Endothelial cell of umbilical vein (primary cell): ENCODE measurements at regions of chr9 and their contacts with region 1.

Region 1: GRCh38 chr9:3875364-3876132 is 349.7 kb upstream of the RFX3 start:
- DNase-seq: peak; percentile 92
- H3K4me3 ChIP-seq: no peak overlapping the region
- H3K27ac ChIP-seq: peak overlapping the region; percentile 56
- H3K4me1 ChIP-seq: peaks cover 23% of the 10 kb centered on the region
- H3K27me3 ChIP-seq: peaks cover 14 to 19% of the 10 kb centered on the region in 2 experiments
- CTCF ChIP-seq: no peak
- POLR2A ChIP-seq: peak; percentile 38

Region 2: GRCh38 chr9:3467593-3468219 is 407.8 kb before region 1 on chr9:
- CTCF ChIA-PET with region 1: no interaction called
- POLR2A ChIA-PET with region 1: no interaction called
- dilution Hi-C with region 1: no loop called
- intact Hi-C with region 1: loop called (anchors 5 kb)
- DNase-seq: peak; percentile 66
- H3K4me3 ChIP-seq: no peak overlapping the region
- H3K27ac ChIP-seq: no peak overlapping the region
- H3K4me1 ChIP-seq: peaks cover 13% of the 10 kb centered on the region
- H3K27me3 ChIP-seq: no peaks in the 10 kb centered on the region
- CTCF ChIP-seq: peak; percentile 94
- POLR2A ChIP-seq: no peak

Region 3: GRCh38 chr9:3549225-3549624 is 326.3 kb before region 1 on chr9:
- CTCF ChIA-PET with region 1: no interaction called
- POLR2A ChIA-PET with region 1: no interaction called
- dilution Hi-C with region 1: no loop called
- intact Hi-C with region 1: no loop called
- DNase-seq: no peak
- H3K4me3 ChIP-seq: no peak overlapping the region
- H3K27ac ChIP-seq: no peak overlapping the region
- H3K4me1 ChIP-seq: no peaks in the 10 kb centered on the region
- H3K27me3 ChIP-seq: no peaks in the 10 kb centered on the region
- CTCF ChIP-seq: no peak
- POLR2A ChIP-seq: no peak

Region 4: DNA sequence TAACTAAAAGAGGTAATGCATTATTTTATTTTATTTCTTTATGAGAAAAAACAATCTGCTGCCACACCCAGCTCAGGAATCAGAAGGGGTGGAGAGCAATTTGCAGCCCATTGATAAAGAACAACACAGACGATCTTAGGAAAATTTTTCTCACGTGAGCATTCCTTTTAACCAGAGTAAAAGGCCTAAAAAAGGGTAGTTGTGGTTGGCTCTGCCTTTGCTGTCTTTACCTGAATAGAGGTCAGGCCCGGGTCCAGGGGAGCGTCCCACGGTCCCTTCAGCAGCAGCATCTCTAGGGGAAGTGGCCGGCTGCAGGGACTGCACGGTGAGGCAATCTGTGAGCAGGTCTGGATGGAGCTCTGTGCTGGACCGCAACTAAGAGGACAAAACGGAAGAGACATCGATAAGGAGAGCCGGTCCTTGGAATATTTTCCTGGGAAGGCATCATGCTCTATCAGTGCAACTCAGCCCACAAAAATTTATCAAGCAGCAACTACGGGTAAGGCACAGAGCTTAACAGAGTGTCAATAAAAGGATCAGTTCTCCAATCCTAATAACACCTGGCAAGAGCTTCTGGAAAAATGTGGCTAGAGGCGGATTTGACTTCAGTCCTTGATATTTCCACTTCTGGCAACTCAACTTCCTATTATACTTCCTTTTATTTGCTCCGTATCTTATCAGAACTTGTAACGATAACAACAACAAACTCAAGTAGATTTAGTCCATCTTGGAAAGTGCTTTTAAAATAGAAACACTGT is 23.1 kb after region 1 on chr9:
- CTCF ChIA-PET with region 1: no interaction called
- POLR2A ChIA-PET with region 1: no interaction called
- dilution Hi-C with region 1: no loop called
- intact Hi-C with region 1: loop called (anchors 1 kb)
- DNase-seq: peak; percentile 55
- H3K4me3 ChIP-seq: peak overlapping the region in 1 of 3 experiments; percentile 28
- H3K27ac ChIP-seq: no peak overlapping the region
- H3K4me1 ChIP-seq: peaks cover 14% of the 10 kb centered on the region
- H3K27me3 ChIP-seq: peaks cover 39 to 69% of the 10 kb centered on the region in 2 experiments
- CTCF ChIP-seq: no peak
- POLR2A ChIP-seq: no peak

Region 5: GRCh38 chr9:3936520-3937235 is 61.1 kb after region 1 on chr9:
- CTCF ChIA-PET with region 1: interaction called, 4 read pairs
- POLR2A ChIA-PET with region 1: no interaction called
- dilution Hi-C with region 1: no loop called
- intact Hi-C with region 1: loop called (anchors 1 kb)
- DNase-seq: peak; percentile 93
- H3K4me3 ChIP-seq: no peak overlapping the region
- H3K27ac ChIP-seq: peak overlapping the region; percentile 39
- H3K4me1 ChIP-seq: peaks cover 9% of the 10 kb centered on the region
- H3K27me3 ChIP-seq: peaks cover 0 to 3% of the 10 kb centered on the region in 2 experiments
- CTCF ChIP-seq: no peak
- POLR2A ChIP-seq: no peak

Region 6: DNA sequence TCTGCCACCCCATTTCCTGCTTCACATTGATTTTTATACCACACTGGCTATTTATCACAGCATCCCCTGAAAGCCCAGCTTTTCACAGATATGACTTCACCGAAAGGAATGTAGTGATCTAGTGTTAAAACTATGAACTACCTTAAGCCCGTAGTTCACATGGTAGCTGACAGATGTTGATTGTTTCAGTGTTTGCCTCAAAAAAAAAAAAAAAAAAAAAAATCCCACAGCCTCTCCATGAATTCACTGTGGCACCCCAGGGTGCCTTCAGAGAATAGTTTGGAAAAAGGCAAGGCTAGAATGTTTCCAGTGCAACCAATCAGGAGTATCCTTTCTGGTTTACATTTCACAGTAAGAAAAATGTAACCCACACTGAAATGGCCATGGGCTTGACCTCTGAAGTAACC is 387.2 kb after region 1 on chr9:
- CTCF ChIA-PET with region 1: no interaction called
- POLR2A ChIA-PET with region 1: interaction called, 11 read pairs
- dilution Hi-C with region 1: no loop called
- intact Hi-C with region 1: no loop called
- DNase-seq: peak; percentile 74
- H3K4me3 ChIP-seq: no peak overlapping the region
- H3K27ac ChIP-seq: peak overlapping the region; percentile 82
- H3K4me1 ChIP-seq: peaks cover 12% of the 10 kb centered on the region
- H3K27me3 ChIP-seq: no peaks in the 10 kb centered on the region
- CTCF ChIP-seq: no peak
- POLR2A ChIP-seq: no peak